ENCODE measurements at regions of chr16 and their contacts with region 1.

Region 1: GRCh38 chr16:74862741-74863244 is 88.2 kb upstream of the FA2H start:
- DNase-seq: no peak
- ATAC-seq: peak; percentile 27; the same call in 1 of the 2 replicates
- H3K4me3 Mint-ChIP-seq: no peak overlapping the region
- H3K27ac Mint-ChIP-seq: peak overlapping the region; percentile 77; the same call in 1 of the 2 replicates
- H3K4me1 Mint-ChIP-seq: peaks cover 43% of the 10 kb centered on the region
- H3K27me3 Mint-ChIP-seq: no peaks in the 10 kb centered on the region
- CTCF ChIP-seq: peak; percentile 70

Region 2: GRCh38 chr16:74695450-74696422 is 167.1 kb before region 1 on chr16:
- CTCF ChIA-PET with region 1: interaction called, 26 read pairs
- POLR2A ChIA-PET with region 1: no interaction called
- DNase-seq: peak; percentile 72
- ATAC-seq: peak; percentile 95
- H3K4me3 Mint-ChIP-seq: peak overlapping the region; percentile 76
- H3K27ac Mint-ChIP-seq: no peak overlapping the region
- H3K4me1 Mint-ChIP-seq: peaks cover 13% of the 10 kb centered on the region
- H3K27me3 Mint-ChIP-seq: peaks cover 23% of the 10 kb centered on the region
- CTCF ChIP-seq: no peak

Region 3: GRCh38 chr16:74726716-74727115 is 136.1 kb before region 1 on chr16:
- CTCF ChIA-PET with region 1: interaction called, 27 read pairs
- POLR2A ChIA-PET with region 1: no interaction called
- DNase-seq: peak; percentile 80
- ATAC-seq: peak; percentile 51
- H3K4me3 Mint-ChIP-seq: no peak overlapping the region
- H3K27ac Mint-ChIP-seq: no peak overlapping the region
- H3K4me1 Mint-ChIP-seq: peaks cover 25% of the 10 kb centered on the region
- H3K27me3 Mint-ChIP-seq: no peaks in the 10 kb centered on the region
- CTCF ChIP-seq: peak; percentile 54; the same call in 1 of the 2 replicates

Region 4: DNA sequence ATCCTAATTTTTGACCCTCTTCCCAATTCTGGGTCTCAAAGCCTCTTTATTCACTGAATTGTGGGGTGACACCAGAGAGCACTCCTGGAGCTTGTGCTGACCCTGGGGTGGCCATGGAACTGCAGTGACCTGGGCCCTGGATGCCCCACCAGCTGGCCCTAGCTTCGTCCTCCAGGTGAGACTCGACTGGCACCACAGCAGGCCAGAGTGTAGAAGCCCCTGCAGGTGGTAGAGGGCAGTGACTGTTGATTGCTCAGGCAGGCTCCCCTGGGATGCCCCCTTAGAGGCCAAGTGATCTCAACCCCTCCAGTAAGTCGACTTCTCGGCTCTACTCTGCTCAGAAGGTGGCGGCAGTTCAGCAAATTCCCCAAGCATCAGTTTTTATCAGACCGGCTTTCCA is 94.6 kb before region 1 on chr16:
- CTCF ChIA-PET with region 1: interaction called, 15 read pairs
- POLR2A ChIA-PET with region 1: no interaction called
- DNase-seq: no peak
- ATAC-seq: peak; percentile 46
- H3K4me3 Mint-ChIP-seq: no peak overlapping the region
- H3K27ac Mint-ChIP-seq: no peak overlapping the region
- H3K4me1 Mint-ChIP-seq: peaks cover under 1% of the 10 kb centered on the region; the same call in 1 of the 2 replicates
- H3K27me3 Mint-ChIP-seq: peaks cover 6% of the 10 kb centered on the region
- CTCF ChIP-seq: no peak

Region 5: DNA sequence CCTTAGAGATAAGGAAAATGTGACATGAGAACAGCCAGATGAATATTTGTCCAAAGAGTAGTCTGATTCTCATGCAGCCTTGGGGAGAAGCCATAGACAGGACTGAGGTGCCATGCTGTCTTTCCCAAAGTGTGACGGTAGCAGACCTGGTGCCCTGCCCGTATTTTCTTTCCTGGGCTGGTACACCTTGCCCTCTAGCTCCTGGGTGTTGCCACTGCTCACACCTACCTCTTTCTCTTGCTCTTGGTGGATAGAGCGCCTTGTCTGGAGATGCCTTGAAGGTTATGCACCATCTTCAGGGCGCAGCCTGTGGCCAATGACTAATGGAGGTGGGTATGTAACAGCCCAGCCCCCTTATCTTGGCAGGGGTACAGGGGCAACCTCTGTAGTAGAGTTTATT is 41.9 kb before region 1 on chr16:
- CTCF ChIA-PET with region 1: interaction called, 112 read pairs
- POLR2A ChIA-PET with region 1: no interaction called
- DNase-seq: no peak
- ATAC-seq: no peak
- H3K4me3 Mint-ChIP-seq: no peak overlapping the region
- H3K27ac Mint-ChIP-seq: no peak overlapping the region
- H3K4me1 Mint-ChIP-seq: peaks cover 4% of the 10 kb centered on the region
- H3K27me3 Mint-ChIP-seq: no peaks in the 10 kb centered on the region; the same call in 1 of the 2 replicates
- CTCF ChIP-seq: no peak

Region 6: DNA sequence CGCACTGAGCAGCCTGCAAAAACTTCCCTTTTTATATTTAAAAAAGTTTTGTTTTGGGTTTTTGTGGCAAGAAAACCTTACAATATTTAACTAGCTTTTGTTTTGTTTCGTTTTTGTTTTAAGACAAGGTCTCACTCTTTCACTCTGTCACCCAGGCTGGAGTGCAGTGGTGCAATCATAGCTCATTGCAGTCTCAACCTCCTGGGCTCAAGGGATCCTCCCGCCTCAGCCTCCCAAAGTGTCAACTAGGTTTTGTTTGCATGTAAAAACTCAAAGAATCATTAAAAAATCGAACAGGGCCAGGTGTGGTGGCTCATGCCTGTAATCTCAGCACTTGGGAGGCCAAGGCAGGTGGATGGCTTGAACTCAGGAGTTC is 10.3 kb before region 1 on chr16:
- CTCF ChIA-PET with region 1: interaction called, 12 read pairs
- POLR2A ChIA-PET with region 1: interaction called, 3 read pairs
- DNase-seq: no peak
- ATAC-seq: no peak
- H3K4me3 Mint-ChIP-seq: no peak overlapping the region
- H3K27ac Mint-ChIP-seq: no peak overlapping the region
- H3K4me1 Mint-ChIP-seq: peaks cover 13% of the 10 kb centered on the region
- H3K27me3 Mint-ChIP-seq: peaks cover 3% of the 10 kb centered on the region; the same call in 1 of the 2 replicates
- CTCF ChIP-seq: no peak

Region 7: GRCh38 chr16:74975591-74975990 is 112.8 kb after region 1 on chr16:
- CTCF ChIA-PET with region 1: no interaction called
- POLR2A ChIA-PET with region 1: no interaction called
- DNase-seq: no peak
- ATAC-seq: no peak
- H3K4me3 Mint-ChIP-seq: no peak overlapping the region
- H3K27ac Mint-ChIP-seq: no peak overlapping the region
- H3K4me1 Mint-ChIP-seq: no peaks in the 10 kb centered on the region
- H3K27me3 Mint-ChIP-seq: no peaks in the 10 kb centered on the region
- CTCF ChIP-seq: no peak

Measured in WTC11 (cell line).